Activated CD8-positive, alpha-beta T cell treated with anti-CD3 and anti-CD28 coated beads for 36 hours (primary cell): ENCODE measurements at regions of chr7 and their contacts with region 1.

Region 1: GRCh38 chr7:155598810-155599210 is 45.7 kb upstream of the RBM33 start:
- DNase-seq: peak; percentile 94
- ATAC-seq: peak; percentile 92
- H3K4me3 Mint-ChIP-seq: no peak overlapping the region
- H3K27ac Mint-ChIP-seq: no peak overlapping the region
- H3K4me1 Mint-ChIP-seq: peaks cover 14% of the 10 kb centered on the region
- H3K27me3 Mint-ChIP-seq: peaks cover 16% of the 10 kb centered on the region
- CTCF ChIP-seq: peak; percentile 92

Region 2: GRCh38 chr7:154996752-154997151 is 602.1 kb before region 1 on chr7:
- CTCF ChIA-PET with region 1: no interaction called
- POLR2A ChIA-PET with region 1: no interaction called
- intact Hi-C with region 1: no loop called
- DNase-seq: no peak
- ATAC-seq: no peak
- H3K4me3 Mint-ChIP-seq: no peak overlapping the region
- H3K27ac Mint-ChIP-seq: no peak overlapping the region
- H3K4me1 Mint-ChIP-seq: peaks cover 2% of the 10 kb centered on the region
- H3K27me3 Mint-ChIP-seq: no peaks in the 10 kb centered on the region
- CTCF ChIP-seq: no peak

Region 3: DNA sequence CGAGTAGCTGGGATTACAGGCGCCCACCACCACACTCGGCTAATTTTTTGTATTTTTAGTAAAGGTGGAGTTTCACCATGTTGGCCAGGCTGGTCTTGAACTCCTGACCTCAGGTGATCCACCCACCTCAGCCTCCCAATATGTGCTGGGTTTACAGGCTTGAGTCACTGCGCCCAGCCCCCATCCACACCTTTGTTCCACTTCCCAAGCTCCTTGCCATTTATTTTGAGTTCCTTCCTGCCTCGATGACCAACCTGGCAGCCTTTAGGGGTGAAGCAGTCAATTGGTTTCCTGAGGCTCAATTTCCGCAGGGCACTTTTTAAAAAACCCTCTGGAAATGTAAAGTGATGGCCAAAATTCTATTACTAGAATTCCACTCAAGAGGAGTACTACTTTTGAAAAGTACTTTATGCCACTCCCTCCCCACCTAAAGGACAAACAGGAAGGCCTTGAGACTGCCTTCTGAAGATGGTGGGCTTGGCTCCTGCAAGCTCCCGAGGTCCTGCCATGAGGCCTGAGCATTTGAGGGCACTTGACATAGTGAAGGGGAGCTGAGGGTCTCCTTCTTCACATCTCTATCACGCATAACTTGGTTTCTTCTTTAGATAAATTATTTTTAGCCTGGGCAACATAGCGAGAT is 13.1 kb after region 1 on chr7:
- CTCF ChIA-PET with region 1: interaction called, 15 read pairs
- POLR2A ChIA-PET with region 1: no interaction called
- intact Hi-C with region 1: no loop called
- DNase-seq: no peak
- ATAC-seq: no peak
- H3K4me3 Mint-ChIP-seq: no peak overlapping the region
- H3K27ac Mint-ChIP-seq: no peak overlapping the region
- H3K4me1 Mint-ChIP-seq: no peaks in the 10 kb centered on the region
- H3K27me3 Mint-ChIP-seq: peaks cover 1% of the 10 kb centered on the region
- CTCF ChIP-seq: no peak

Region 4: DNA sequence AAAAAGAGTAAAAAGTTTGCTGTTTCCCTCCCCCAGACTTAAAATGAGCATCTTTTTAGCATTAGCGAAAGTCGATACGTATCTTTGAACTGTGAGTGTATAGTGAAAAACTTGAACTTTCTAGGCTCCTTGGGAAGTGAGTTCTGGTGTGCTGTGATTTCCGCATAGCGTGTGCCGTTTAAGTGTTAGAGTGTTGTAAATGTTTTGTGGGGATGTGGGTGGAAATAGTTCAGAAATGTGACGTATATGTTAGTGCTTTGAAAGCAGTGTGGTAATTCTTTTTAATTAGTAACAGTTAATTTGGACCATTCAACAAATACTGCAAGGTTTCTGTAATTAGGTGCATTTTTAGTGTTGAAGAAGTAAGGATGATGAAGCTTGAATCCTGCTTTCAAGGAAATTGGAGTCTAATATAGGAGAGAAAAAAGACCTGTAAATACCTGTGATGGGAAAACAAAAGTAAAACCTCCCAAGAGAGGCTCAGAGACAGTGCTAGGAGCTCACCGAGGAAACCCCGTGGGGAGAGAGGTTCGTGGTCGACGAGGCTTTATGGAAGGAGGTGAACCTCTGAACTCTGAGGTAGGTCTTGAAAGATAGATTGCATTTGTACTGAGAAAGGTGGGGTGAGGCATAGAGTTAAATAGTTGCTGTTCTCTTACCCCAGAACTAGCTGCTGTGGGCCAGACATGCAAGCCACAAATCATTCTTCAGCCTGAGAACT is 86.4 kb after region 1 on chr7:
- CTCF ChIA-PET with region 1: interaction called, 10 read pairs
- POLR2A ChIA-PET with region 1: interaction called, 3 read pairs
- intact Hi-C with region 1: no loop called
- DNase-seq: peak; percentile 58
- ATAC-seq: peak; percentile 94
- H3K4me3 Mint-ChIP-seq: peak overlapping the region; percentile 30
- H3K27ac Mint-ChIP-seq: peak overlapping the region; percentile 71
- H3K4me1 Mint-ChIP-seq: peaks cover 79% of the 10 kb centered on the region
- H3K27me3 Mint-ChIP-seq: no peaks in the 10 kb centered on the region
- CTCF ChIP-seq: no peak

Region 5: DNA sequence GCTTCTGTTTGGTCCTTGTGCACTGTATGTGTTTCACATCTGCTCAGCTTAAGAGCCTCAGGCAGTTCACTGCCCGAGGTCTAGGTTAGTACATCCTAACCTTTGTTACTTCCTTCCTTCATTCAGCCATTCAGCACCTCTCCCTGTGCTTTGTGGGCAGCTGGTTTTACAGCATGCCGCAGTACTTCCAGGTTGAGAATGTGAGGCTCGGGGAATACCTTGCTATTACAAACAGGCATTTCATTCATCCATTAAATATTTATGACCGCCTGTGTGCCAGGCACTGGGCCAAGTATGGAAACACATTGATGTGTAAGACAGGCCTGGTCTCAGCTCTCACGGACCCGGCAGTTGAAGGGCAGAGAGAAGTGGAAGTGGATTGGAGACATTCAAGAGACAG is 131.0 kb after region 1 on chr7:
- CTCF ChIA-PET with region 1: interaction called, 43 read pairs
- POLR2A ChIA-PET with region 1: no interaction called
- intact Hi-C with region 1: loop called (anchors 10 kb)
- DNase-seq: no peak
- ATAC-seq: no peak
- H3K4me3 Mint-ChIP-seq: no peak overlapping the region
- H3K27ac Mint-ChIP-seq: peak overlapping the region; percentile 32
- H3K4me1 Mint-ChIP-seq: peaks cover 60% of the 10 kb centered on the region
- H3K27me3 Mint-ChIP-seq: no peaks in the 10 kb centered on the region
- CTCF ChIP-seq: no peak

Region 6: GRCh38 chr7:155752756-155753445 is 154.1 kb after region 1 on chr7:
- CTCF ChIA-PET with region 1: interaction called, 19 read pairs
- POLR2A ChIA-PET with region 1: no interaction called
- intact Hi-C with region 1: no loop called
- DNase-seq: no peak
- ATAC-seq: peak; percentile 15
- H3K4me3 Mint-ChIP-seq: no peak overlapping the region
- H3K27ac Mint-ChIP-seq: peak overlapping the region; percentile 74
- H3K4me1 Mint-ChIP-seq: peaks cover 82% of the 10 kb centered on the region
- H3K27me3 Mint-ChIP-seq: no peaks in the 10 kb centered on the region
- CTCF ChIP-seq: no peak

Region 7: DNA sequence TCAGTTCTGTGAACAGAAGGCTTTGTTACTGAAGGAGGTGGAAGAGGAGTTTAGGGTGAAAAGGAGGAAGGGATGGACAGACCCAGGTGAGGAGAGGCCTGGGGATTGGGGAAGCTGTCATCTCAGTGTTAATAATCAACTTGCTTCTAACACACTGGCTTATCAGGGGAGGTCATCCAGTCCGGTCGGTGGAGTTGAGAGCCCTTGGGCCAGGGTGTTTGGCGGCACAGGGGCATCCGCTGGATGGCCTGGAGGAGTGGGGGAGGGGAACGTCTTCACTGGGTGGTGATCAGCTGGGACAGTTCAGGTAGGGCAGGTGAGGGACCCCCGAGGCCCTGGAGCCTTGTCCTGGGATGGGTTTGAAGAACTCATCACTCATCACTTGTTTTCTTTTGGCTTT is 179.5 kb after region 1 on chr7:
- CTCF ChIA-PET with region 1: interaction called, 158 read pairs
- POLR2A ChIA-PET with region 1: interaction called, 3 read pairs
- intact Hi-C with region 1: no loop called
- DNase-seq: no peak
- ATAC-seq: no peak
- H3K4me3 Mint-ChIP-seq: no peak overlapping the region
- H3K27ac Mint-ChIP-seq: no peak overlapping the region
- H3K4me1 Mint-ChIP-seq: no peaks in the 10 kb centered on the region
- H3K27me3 Mint-ChIP-seq: no peaks in the 10 kb centered on the region
- CTCF ChIP-seq: no peak